CD4-positive, alpha-beta T cell (primary cell): ENCODE measurements at regions of chr1 and their contacts with region 1.

Region 1: GRCh38 chr1:26417111-26417759 is 6.6 kb downstream of the LIN28A start:
- DNase-seq: peak; percentile 78 to 91 (median 82)
- ATAC-seq: peak; percentile 100
- H3K4me3 ChIP-seq: no peak overlapping the region
- H3K4me3 Mint-ChIP-seq: no peak overlapping the region
- H3K27ac ChIP-seq: no peak overlapping the region
- H3K27ac Mint-ChIP-seq: no peak overlapping the region
- H3K4me1 ChIP-seq: no peaks in the 10 kb centered on the region
- H3K4me1 Mint-ChIP-seq: no peaks in the 10 kb centered on the region
- H3K27me3 ChIP-seq: peaks cover 19 to 27% of the 10 kb centered on the region in 2 experiments
- H3K27me3 Mint-ChIP-seq: peaks cover 40% of the 10 kb centered on the region
- CTCF ChIP-seq: peak; percentile 95

Region 2: GRCh38 chr1:26035959-26036755 is 381.1 kb before region 1 on chr1:
- CTCF ChIA-PET with region 1: no interaction called
- POLR2A ChIA-PET with region 1: no interaction called
- intact Hi-C with region 1: loop called in 1 of 2 experiments (anchors 10 kb)
- DNase-seq: peak; percentile 57 to 88 (median 72)
- ATAC-seq: peak; percentile 65
- H3K4me3 ChIP-seq: peak overlapping the region; percentile 99
- H3K4me3 Mint-ChIP-seq: peak overlapping the region; percentile 94
- H3K27ac ChIP-seq: peak overlapping the region; percentile 60 to 75
- H3K27ac Mint-ChIP-seq: peak overlapping the region; percentile 88
- H3K4me1 ChIP-seq: peaks cover 22% of the 10 kb centered on the region
- H3K4me1 Mint-ChIP-seq: peaks cover 17% of the 10 kb centered on the region
- H3K27me3 ChIP-seq: peaks cover 0 to 2% of the 10 kb centered on the region in 2 experiments
- H3K27me3 Mint-ChIP-seq: no peaks in the 10 kb centered on the region
- CTCF ChIP-seq: peak; percentile 100

Region 3: DNA sequence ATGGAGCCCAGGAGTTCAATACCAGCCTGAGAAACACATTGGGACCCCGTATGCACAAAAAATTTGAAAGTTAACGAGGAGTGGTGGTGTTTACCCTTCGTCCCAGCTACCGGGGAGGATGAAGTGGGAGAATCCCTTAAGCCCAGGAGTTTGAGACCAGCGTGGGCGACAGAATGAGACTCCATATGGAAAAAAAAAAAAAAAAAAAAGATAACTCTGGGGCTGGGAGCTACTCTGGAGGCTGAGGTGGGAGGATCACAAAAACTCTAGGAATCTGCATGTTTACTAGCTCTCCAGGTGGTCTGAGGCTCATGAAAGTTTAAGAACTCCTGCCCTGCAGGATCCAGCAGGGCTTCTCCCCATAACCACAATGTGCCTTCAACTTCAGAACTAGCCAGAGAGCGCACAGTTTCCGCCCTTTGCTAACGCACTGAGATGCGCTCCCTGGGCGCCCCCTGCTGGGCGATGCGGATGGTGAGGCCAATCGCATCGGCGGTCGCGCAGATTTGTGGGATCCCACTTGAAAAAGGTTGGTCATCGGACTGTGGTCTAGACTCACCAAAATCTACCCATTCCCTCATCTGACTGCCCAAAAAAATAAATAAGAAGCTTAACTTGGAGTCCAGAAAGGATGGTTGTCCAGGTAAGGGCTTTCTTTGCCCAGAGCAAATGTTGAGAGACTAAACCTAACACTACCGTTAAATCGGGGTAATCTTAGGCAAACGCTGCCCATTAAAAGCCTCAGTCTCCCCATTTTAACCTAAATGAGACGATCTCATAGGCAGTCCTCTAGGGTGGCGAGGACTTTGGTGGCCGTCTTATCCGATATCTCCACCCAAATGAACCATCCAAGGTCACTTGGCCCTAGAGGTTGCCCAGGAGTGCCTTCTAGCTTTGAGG is 53.4 kb before region 1 on chr1:
- CTCF ChIA-PET with region 1: interaction called, 9 read pairs
- POLR2A ChIA-PET with region 1: interaction called, 4 read pairs
- intact Hi-C with region 1: loop called in 1 of 2 experiments (anchors 1 kb)
- DNase-seq: peak; percentile 74 to 96 (median 84)
- ATAC-seq: peak; percentile 61
- H3K4me3 ChIP-seq: no peak overlapping the region
- H3K4me3 Mint-ChIP-seq: peak overlapping the region; percentile 69
- H3K27ac ChIP-seq: no peak overlapping the region
- H3K27ac Mint-ChIP-seq: no peak overlapping the region
- H3K4me1 ChIP-seq: peaks cover 79% of the 10 kb centered on the region
- H3K4me1 Mint-ChIP-seq: peaks cover 56% of the 10 kb centered on the region
- H3K27me3 ChIP-seq: peaks cover 0 to 21% of the 10 kb centered on the region in 2 experiments
- H3K27me3 Mint-ChIP-seq: peaks cover 28% of the 10 kb centered on the region
- CTCF ChIP-seq: peak; percentile 98

Region 4: DNA sequence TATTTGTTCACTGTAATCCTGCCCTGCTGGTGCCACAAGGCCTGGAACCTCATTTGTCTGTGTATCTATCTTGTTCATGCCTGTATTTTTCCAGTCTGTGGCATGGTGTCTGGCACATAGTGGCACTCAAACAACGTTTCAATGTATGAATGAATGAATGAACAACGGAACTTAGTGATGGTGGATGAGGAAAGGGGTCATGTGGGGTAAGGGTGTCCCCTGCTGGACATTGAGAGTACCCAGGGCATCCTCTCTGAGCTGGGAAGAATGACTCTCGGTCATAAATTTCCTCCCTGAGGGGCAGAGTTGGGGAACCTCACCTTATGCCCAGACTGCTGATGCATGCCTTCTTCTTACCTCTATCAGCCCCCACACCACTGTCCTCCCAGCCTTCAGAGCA is 25.8 kb before region 1 on chr1:
- CTCF ChIA-PET with region 1: interaction called, 15 read pairs
- POLR2A ChIA-PET with region 1: no interaction called
- intact Hi-C with region 1: no loop called
- DNase-seq: peak in 12 of 14 experiments; percentile 21 to 80 (median 36)
- ATAC-seq: peak; percentile 69
- H3K4me3 ChIP-seq: no peak overlapping the region
- H3K4me3 Mint-ChIP-seq: no peak overlapping the region
- H3K27ac ChIP-seq: no peak overlapping the region
- H3K27ac Mint-ChIP-seq: no peak overlapping the region
- H3K4me1 ChIP-seq: peaks cover 41% of the 10 kb centered on the region
- H3K4me1 Mint-ChIP-seq: peaks cover 20% of the 10 kb centered on the region
- H3K27me3 ChIP-seq: no peaks in the 10 kb centered on the region
- H3K27me3 Mint-ChIP-seq: no peaks in the 10 kb centered on the region
- CTCF ChIP-seq: peak; percentile 68

Region 5: DNA sequence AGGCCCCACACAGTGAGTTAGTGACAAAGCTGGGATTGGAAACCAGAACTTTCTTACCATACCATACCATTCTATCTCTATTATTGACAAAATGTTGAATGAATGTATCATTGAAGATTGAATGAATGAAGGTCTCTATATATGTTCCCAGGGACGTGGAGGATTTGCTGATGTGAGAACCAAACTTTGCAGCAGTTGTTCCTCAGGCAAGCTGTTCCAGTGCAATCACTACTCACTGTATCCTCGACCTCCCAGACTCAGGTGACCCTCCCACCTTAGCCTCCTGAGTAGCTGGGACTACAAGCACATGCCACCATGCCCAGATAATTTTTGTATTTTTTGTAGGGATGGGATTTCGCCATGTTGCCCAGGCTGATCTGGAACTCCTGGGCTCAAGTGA is 18.2 kb before region 1 on chr1:
- CTCF ChIA-PET with region 1: interaction called, 15 read pairs
- POLR2A ChIA-PET with region 1: no interaction called
- intact Hi-C with region 1: no loop called
- DNase-seq: no peak
- ATAC-seq: no peak
- H3K4me3 ChIP-seq: no peak overlapping the region
- H3K4me3 Mint-ChIP-seq: no peak overlapping the region
- H3K27ac ChIP-seq: no peak overlapping the region
- H3K27ac Mint-ChIP-seq: no peak overlapping the region
- H3K4me1 ChIP-seq: peaks cover 5% of the 10 kb centered on the region
- H3K4me1 Mint-ChIP-seq: peaks cover 4% of the 10 kb centered on the region
- H3K27me3 ChIP-seq: peaks cover 6 to 8% of the 10 kb centered on the region in 2 experiments
- H3K27me3 Mint-ChIP-seq: peaks cover 22% of the 10 kb centered on the region
- CTCF ChIP-seq: no peak